PC-9 (cell line): ENCODE measurements at regions of chr1 and their contacts with region 1.

Region 1: GRCh38 chr1:46659307-46659870 is 8.8 kb downstream of the ATPAF1 start:
- DNase-seq: no peak
- H3K4me3 ChIP-seq: no peak overlapping the region
- H3K27ac ChIP-seq: no peak overlapping the region
- H3K4me1 ChIP-seq: no peaks in the 10 kb centered on the region
- H3K27me3 ChIP-seq: no peaks in the 10 kb centered on the region
- CTCF ChIP-seq: no peak

Region 2: GRCh38 chr1:45084562-45084961 is 1574.8 kb before region 1 on chr1:
- CTCF ChIA-PET with region 1: no interaction called
- POLR2A ChIA-PET with region 1: interaction called, 13 read pairs
- intact Hi-C with region 1: no loop called
- DNase-seq: no peak
- H3K4me3 ChIP-seq: no peak overlapping the region
- H3K27ac ChIP-seq: no peak overlapping the region
- H3K4me1 ChIP-seq: no peaks in the 10 kb centered on the region
- H3K27me3 ChIP-seq: no peaks in the 10 kb centered on the region
- CTCF ChIP-seq: no peak

Region 3: GRCh38 chr1:46643368-46643775 is 16.0 kb before region 1 on chr1:
- CTCF ChIA-PET with region 1: no interaction called
- POLR2A ChIA-PET with region 1: no interaction called
- intact Hi-C with region 1: no loop called
- DNase-seq: peak; percentile 55 to 95
- H3K4me3 ChIP-seq: no peak overlapping the region
- H3K27ac ChIP-seq: peak overlapping the region; percentile 62
- H3K4me1 ChIP-seq: peaks cover 23% of the 10 kb centered on the region
- H3K27me3 ChIP-seq: no peaks in the 10 kb centered on the region
- CTCF ChIP-seq: no peak